CD8-positive, alpha-beta T cell (primary cell): ENCODE measurements at regions of chr7 and their contacts with region 1.

Region 1: GRCh38 chr7:87910138-87910537 is 23.9 kb upstream of the ADAM22 start:
- DNase-seq: no peak
- ATAC-seq: no peak
- H3K4me3 ChIP-seq: no peak overlapping the region
- H3K4me3 Mint-ChIP-seq: no peak overlapping the region
- H3K27ac ChIP-seq: no peak overlapping the region
- H3K27ac Mint-ChIP-seq: no peak overlapping the region
- H3K4me1 ChIP-seq: no peaks in the 10 kb centered on the region
- H3K4me1 Mint-ChIP-seq: peaks cover 9% of the 10 kb centered on the region
- H3K27me3 ChIP-seq: no peaks in the 10 kb centered on the region
- H3K27me3 Mint-ChIP-seq: no peaks in the 10 kb centered on the region
- CTCF ChIP-seq: no peak

Region 2: DNA sequence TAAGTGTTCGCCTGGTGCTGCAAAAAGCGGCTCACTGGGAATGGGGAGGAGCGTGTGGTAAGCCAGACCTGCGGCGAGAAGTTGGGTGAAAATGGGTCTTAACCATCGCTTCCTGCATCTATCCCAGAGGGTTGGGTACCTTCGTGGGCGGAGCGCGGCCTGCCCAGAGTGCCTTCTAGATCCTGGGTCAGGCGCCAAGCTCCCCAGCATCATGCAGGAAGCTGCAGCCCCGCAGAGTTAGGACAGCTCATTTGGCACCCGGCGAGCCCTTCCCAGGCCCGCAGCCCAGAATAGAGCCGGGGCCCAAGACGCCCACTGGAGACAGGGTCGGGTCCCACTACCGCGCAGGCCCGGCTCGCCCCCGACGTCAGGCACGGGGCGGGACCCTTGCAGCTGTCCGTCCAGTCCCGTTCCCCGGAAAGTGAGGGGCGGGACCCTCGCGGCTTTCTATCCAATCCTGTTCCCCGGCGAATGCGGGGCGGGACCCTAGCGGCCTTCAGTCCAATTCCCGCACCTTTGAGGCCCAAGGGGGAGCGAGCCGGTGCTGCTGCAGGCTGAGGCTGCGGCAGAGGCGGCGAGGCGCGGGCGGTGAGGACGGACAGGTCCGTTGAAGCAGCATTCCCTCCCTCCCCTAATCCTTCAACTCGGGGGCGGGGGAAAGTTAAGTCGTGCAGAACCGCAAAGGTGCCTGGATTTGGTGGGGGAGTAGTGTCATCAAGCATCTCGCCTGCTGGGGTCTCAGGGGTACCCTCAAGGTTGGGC is 564.8 kb before region 1 on chr7 and contains the start of gene CROT:
- CTCF ChIA-PET with region 1: no interaction called
- POLR2A ChIA-PET with region 1: no interaction called
- intact Hi-C with region 1: no loop called
- DNase-seq: peak; percentile 84 to 96 (median 94)
- ATAC-seq: peak; percentile 96
- H3K4me3 ChIP-seq: peak within 1 kb of the TSS; percentile 91 to 96
- H3K4me3 Mint-ChIP-seq: peak within 1 kb of the TSS; percentile 95
- H3K27ac ChIP-seq: peak within 1 kb of the TSS; percentile 87 to 89
- H3K27ac Mint-ChIP-seq: peak within 1 kb of the TSS; percentile 96
- H3K4me1 ChIP-seq: peaks cover 25% of the 10 kb centered on the region
- H3K4me1 Mint-ChIP-seq: peaks cover 50% of the 10 kb centered on the region
- H3K27me3 ChIP-seq: no peaks in the 10 kb centered on the region
- H3K27me3 Mint-ChIP-seq: no peaks in the 10 kb centered on the region
- CTCF ChIP-seq: no peak
- total RNA-seq, gene CROT: 5.3 to 7.2 TPM

Region 3: GRCh38 chr7:87933945-87934698 is 24.0 kb after region 1 on chr7 and contains the start of gene ADAM22:
- CTCF ChIA-PET with region 1: no interaction called
- POLR2A ChIA-PET with region 1: interaction called, 3 read pairs
- intact Hi-C with region 1: loop called in 1 of 2 experiments (anchors 2 kb)
- DNase-seq: peak; percentile 65 to 94 (median 85)
- ATAC-seq: peak; percentile 94
- H3K4me3 ChIP-seq: peak within 1 kb of the TSS; percentile 73 to 82
- H3K4me3 Mint-ChIP-seq: peak within 1 kb of the TSS; percentile 89
- H3K27ac ChIP-seq: peak within 1 kb of the TSS; percentile 32 to 71
- H3K27ac Mint-ChIP-seq: peak within 1 kb of the TSS; percentile 79
- H3K4me1 ChIP-seq: peaks cover 7% of the 10 kb centered on the region
- H3K4me1 Mint-ChIP-seq: peaks cover 11% of the 10 kb centered on the region
- H3K27me3 ChIP-seq: no peaks in the 10 kb centered on the region
- H3K27me3 Mint-ChIP-seq: no peaks in the 10 kb centered on the region
- CTCF ChIP-seq: no peak
- total RNA-seq, gene ADAM22: 1.1 to 1.7 TPM

Region 4: GRCh38 chr7:88101769-88102168 is 191.6 kb after region 1 on chr7:
- CTCF ChIA-PET with region 1: no interaction called
- POLR2A ChIA-PET with region 1: no interaction called
- intact Hi-C with region 1: loop called in 1 of 2 experiments (anchors 10 kb)
- DNase-seq: peak in 1 of 9 experiments; percentile 34
- ATAC-seq: peak; percentile 26
- H3K4me3 ChIP-seq: no peak overlapping the region
- H3K4me3 Mint-ChIP-seq: no peak overlapping the region
- H3K27ac ChIP-seq: no peak overlapping the region
- H3K27ac Mint-ChIP-seq: peak overlapping the region; percentile 0
- H3K4me1 ChIP-seq: no peaks in the 10 kb centered on the region
- H3K4me1 Mint-ChIP-seq: peaks cover 9% of the 10 kb centered on the region
- H3K27me3 ChIP-seq: no peaks in the 10 kb centered on the region
- H3K27me3 Mint-ChIP-seq: no peaks in the 10 kb centered on the region
- CTCF ChIP-seq: no peak